Testis (tissue), 5 donors: ENCODE measurements at regions of chr6 and their contacts with region 1.

Region 1: GRCh38 chr6:108558372-108559096 is 2.2 kb upstream of the FOXO3 start:
- DNase-seq: peak; percentile 99
- H3K4me3 ChIP-seq: peak overlapping the region; percentile 87 to 98
- H3K27ac ChIP-seq: peak overlapping the region; percentile 98 to 100
- H3K4me1 ChIP-seq: peaks cover 12% of the 10 kb centered on the region
- H3K27me3 ChIP-seq: no peaks in the 10 kb centered on the region
- CTCF ChIP-seq: no peak
- POLR2A ChIP-seq: peak; percentile 93

Region 2: DNA sequence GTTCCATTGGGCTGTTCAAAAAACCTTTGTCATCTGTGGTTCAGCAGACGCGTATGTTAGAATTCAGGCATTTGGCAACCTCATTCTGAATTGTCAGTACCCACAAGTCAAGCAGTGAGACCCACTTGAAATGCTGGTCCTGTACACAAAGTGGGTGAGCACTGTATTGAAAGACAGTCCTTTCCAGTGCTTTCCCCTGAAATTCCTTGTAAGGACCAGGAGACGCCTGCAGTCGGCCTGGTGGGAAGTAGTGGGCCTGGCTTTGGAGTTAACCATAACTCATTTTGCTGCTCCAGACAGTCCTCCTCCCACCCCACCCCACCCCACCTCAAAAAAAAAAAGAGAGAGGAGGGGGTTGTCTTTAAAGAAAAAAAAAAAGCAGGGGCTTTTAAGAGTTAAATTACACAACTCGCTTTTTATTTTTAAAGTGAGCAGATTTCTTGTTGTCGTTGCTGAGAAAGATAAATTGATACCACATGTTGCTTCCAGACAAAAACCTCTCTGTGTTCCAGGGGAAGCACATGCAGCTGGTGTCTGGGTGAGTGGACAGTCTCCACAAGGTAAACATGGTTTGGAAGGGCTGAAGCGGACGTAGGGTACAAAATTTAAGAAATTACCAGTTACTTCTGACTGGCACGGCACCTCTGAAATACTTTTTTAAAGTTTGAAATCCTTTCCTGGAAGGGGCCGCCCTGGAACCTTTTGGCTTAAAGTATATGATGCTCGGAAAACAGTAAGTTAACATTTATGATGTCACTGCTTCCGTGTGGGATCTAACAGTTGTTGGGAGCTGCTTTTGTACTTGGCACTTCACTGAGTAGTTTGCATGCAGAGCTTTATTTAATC is 97.5 kb after region 1 on chr6:
- intact Hi-C with region 1: loop called (anchors 10 kb)
- DNase-seq: peak; percentile 58
- H3K4me3 ChIP-seq: no peak overlapping the region
- H3K27ac ChIP-seq: peak overlapping the region; percentile 75 to 84
- H3K4me1 ChIP-seq: peaks cover 51% of the 10 kb centered on the region
- H3K27me3 ChIP-seq: no peaks in the 10 kb centered on the region
- CTCF ChIP-seq: no peak
- POLR2A ChIP-seq: no peak

Region 3: GRCh38 chr6:108782179-108783041 is 223.9 kb after region 1 on chr6:
- intact Hi-C with region 1: loop called (anchors 10 kb)
- DNase-seq: peak; percentile 92
- H3K4me3 ChIP-seq: peak overlapping the region; percentile 51 to 55
- H3K27ac ChIP-seq: peak overlapping the region in 1 of 2 donors; percentile 64
- H3K4me1 ChIP-seq: no peaks in the 10 kb centered on the region
- H3K27me3 ChIP-seq: no peaks in the 10 kb centered on the region
- CTCF ChIP-seq: peak; percentile 62 to 75 (median 74)
- POLR2A ChIP-seq: no peak

Region 4: DNA sequence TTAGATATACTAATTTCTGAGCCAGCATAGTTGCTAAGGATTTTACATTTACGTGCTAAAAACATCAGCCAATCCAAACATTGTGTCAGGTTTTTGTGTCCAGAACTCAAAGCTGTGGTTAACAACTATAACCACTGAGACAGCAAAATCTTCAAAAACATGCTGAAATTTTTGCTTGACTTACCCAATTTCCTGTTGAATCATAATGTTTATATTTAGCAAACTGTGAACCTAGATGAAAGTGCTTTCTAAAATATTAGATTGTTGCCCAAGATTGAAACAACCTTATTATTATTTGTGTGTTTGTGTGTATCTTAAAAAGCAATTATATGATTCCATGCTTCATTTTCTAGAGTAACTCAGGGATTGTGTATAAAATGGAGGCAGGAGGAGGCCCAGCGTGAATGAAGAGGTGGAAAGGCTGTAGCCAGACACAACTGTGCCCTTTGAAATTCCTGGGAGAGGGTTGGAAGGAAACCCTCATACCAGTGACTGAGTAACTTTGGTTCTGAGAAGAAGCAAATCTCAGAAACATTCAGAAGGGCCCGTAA is 337.7 kb after region 1 on chr6:
- intact Hi-C with region 1: loop called (anchors 10 kb)
- DNase-seq: no peak
- H3K4me3 ChIP-seq: no peak overlapping the region
- H3K27ac ChIP-seq: peak overlapping the region in 1 of 2 donors; percentile 54
- H3K4me1 ChIP-seq: no peaks in the 10 kb centered on the region
- H3K27me3 ChIP-seq: no peaks in the 10 kb centered on the region
- CTCF ChIP-seq: no peak
- POLR2A ChIP-seq: no peak